Breast epithelium (tissue), 4 donors: ENCODE measurements at regions of chr6 and their contacts with region 1.

Region 1: GRCh38 chr6:30719791-30720737 is at the start of gene TUBB:
- DNase-seq: peak; percentile 96 to 97
- H3K4me3 ChIP-seq: peak within 1 kb of the TSS; percentile 67 to 94 (median 93)
- H3K27ac ChIP-seq: peak within 1 kb of the TSS; percentile 88 to 94
- H3K4me1 ChIP-seq: peaks cover 2 to 14% of the 10 kb centered on the region in 2 donors
- H3K27me3 ChIP-seq: no peaks in the 10 kb centered on the region
- CTCF ChIP-seq: peak in 2 of 3 donors; percentile 34 to 53
- POLR2A ChIP-seq: peak; percentile 56
- total RNA-seq, gene TUBB: 189 to 269 (median 212) TPM

Region 2: GRCh38 chr6:30556066-30556905 is 163.8 kb before region 1 on chr6 and contains the start of gene GNL1:
- intact Hi-C with region 1: loop called (anchors 5 kb)
- DNase-seq: peak; percentile 98
- H3K4me3 ChIP-seq: peak within 1 kb of the TSS; percentile 72 to 98 (median 91)
- H3K27ac ChIP-seq: peak within 1 kb of the TSS; percentile 97 to 100
- H3K4me1 ChIP-seq: peaks cover 4 to 15% of the 10 kb centered on the region in 2 donors
- H3K27me3 ChIP-seq: no peaks in the 10 kb centered on the region
- CTCF ChIP-seq: peak; percentile 10 to 33 (median 29)
- POLR2A ChIP-seq: no peak
- total RNA-seq, gene GNL1: 39.7 to 51.2 (median 47.5) TPM

Region 3: DNA sequence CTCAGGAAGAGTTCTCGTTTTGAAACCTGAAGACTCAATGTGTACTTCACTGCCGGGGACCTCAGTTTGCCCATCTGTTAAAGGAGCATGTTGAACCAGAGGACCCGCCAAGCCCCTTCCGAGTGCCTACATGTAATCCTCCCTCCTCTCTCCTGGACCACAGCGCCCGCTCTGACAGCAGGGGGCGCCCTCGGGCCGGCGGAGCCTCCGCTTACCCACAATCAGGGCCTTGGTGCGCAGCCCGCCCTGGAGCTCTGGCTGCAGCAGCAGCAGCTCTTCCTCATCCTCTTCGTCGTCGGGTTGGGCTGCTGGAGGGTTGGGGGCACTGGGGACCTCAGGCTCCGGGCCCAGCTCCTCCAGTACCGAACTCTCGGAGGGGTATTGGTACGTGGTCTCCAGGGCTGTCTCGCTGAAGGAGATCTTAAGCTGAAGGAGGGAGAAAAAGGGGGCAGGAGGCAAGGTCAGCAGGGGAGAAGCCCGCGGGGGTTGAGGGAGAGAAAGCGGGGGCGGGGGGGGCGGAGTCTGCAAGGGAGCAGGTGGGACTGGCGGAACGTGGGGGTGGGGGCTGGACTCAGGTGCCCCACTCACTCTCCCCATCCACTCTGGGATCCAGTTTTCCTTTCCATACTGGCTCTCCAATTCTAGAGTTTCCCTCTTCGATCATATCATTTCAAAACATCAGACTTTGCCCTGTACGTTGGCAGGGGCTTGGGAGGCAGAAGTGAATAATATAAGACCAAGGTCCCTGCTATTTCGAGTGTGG is 40.9 kb before region 1 on chr6:
- intact Hi-C with region 1: loop called (anchors 2 kb)
- DNase-seq: peak; percentile 81 to 88
- H3K4me3 ChIP-seq: peak overlapping the region in 1 of 3 donors; percentile 34
- H3K27ac ChIP-seq: peak overlapping the region; percentile 48 to 51
- H3K4me1 ChIP-seq: peaks cover 7 to 11% of the 10 kb centered on the region in 2 donors
- H3K27me3 ChIP-seq: no peaks in the 10 kb centered on the region
- CTCF ChIP-seq: peak; percentile 89 to 97 (median 95)
- POLR2A ChIP-seq: no peak

Region 4: DNA sequence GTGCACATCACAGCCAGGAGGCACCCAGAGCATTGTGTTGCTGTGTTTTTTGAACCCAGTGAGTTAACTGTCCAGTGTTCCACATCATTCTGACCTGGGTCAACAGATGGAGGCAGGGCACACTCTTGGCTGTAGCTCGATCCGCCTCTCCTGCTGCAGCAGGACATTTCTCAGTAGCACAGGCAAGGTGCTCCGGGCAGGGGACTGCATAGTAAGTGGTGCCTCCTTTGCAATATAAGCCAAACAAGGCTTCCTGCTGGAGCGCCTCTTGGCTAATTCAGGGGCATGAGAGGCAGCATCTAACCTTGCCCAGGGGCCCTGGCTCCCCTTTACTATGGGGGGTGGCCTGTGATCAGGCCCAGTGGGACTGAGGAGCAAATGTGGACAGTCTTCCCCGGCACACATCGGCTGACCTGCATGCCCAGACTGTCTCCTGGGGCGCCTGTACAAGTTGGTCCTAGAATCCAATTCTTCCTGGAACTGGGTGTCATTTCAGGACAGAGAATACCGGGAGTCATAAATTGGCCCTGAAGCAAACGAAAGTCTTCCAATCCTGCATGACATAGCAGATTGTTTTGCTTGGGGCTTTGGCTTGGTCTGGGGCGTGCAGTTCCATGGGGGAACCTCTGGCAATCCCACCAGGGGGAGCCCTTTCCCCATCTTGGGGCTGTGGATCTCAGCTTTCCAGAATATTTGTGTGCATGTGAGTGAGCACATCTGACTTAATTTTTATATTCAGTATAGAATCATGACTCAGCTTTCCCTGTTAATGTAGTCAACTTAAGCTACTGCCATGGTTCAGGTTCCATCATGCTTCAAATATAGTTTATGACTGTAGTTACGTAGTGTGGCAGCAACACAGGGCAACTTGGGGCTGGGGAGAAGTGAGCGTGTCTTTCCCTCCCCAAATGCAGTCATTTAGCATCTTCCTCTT is 108.2 kb after region 1 on chr6:
- intact Hi-C with region 1: no loop called
- DNase-seq: peak; percentile 91 to 93
- H3K4me3 ChIP-seq: peak overlapping the region in 1 of 3 donors; percentile 42
- H3K27ac ChIP-seq: peak overlapping the region; percentile 79 to 86
- H3K4me1 ChIP-seq: peaks cover 4 to 7% of the 10 kb centered on the region in 2 donors
- H3K27me3 ChIP-seq: no peaks in the 10 kb centered on the region
- CTCF ChIP-seq: peak; percentile 85 to 97 (median 94)
- POLR2A ChIP-seq: no peak